ENCODE measurements at regions of chr3 and their contacts with region 1.

Region 1: GRCh38 chr3:169662132-169662842 is 1.2 kb downstream of the MECOM start:
- DNase-seq: peak; percentile 66
- ATAC-seq: peak; percentile 95
- H3K4me3 ChIP-seq: peak overlapping the region; percentile 53 to 66 (median 58); a peak in 5 of 6 replicates
- H3K27ac ChIP-seq: no peak overlapping the region
- H3K4me1 ChIP-seq: peaks cover 19% of the 10 kb centered on the region
- H3K27me3 ChIP-seq: peaks cover 12 to 77% of the 10 kb centered on the region in 2 experiments
- CTCF ChIP-seq: peak; percentile 71
- EP300 ChIP-seq: no peak
- POLR2A ChIP-seq: no peak
- RAD21 ChIP-seq: peak; percentile 65; the same call in 1 of the 2 replicates

Region 2: DNA sequence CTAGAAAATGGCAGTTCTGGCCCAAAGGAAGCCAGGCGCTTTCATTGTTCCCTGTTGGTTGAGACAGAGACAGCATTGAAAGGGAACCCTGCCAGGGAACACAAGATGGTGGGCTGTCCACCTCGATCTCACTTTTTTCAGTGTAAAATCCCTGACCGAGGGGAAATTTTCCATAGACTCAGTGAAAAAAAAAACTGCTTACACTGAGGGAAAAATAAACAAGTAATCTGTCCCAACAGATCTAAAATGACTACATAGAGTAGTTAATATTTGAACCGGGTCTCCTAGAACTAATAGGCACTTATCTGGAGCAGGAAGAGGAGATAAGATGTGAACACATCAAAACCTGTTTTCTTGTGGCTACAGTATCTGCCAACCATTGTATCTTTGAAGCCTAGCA is 803.1 kb before region 1 on chr3:
- CTCF ChIA-PET with region 1: no interaction called
- POLR2A ChIA-PET with region 1: no interaction called
- in situ Hi-C with region 1: loop called (anchors 10 kb)
- intact Hi-C with region 1: loop called (anchors 5 kb)
- DNase-seq: peak; percentile 91
- ATAC-seq: peak; percentile 97
- H3K4me3 ChIP-seq: no peak overlapping the region
- H3K27ac ChIP-seq: peak overlapping the region; percentile 90
- H3K4me1 ChIP-seq: peaks cover 69% of the 10 kb centered on the region
- H3K27me3 ChIP-seq: no peaks in the 10 kb centered on the region
- CTCF ChIP-seq: no peak
- EP300 ChIP-seq: peak in 1 of 2 experiments; percentile 98; a peak in 2 of 4 replicates
- POLR2A ChIP-seq: no peak
- RAD21 ChIP-seq: no peak

Region 3: DNA sequence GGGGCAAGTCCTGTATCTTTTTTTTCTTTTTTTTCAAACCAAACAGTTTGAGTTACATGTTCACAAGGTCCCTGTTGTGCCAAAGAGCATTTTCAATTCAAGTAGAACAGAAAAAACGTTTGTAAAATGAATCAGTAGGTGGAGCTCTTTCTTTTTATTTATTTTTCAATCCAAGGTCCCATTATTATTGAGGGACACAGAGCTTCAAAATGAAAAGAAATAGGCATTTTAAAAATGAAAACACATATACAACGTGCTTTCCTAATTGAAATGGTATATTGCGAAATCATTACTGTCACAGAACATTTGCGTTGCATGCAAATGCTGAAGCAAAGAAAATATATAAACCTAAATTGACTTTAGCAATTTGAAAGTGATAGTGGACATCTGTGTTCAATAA is 709.7 kb before region 1 on chr3:
- CTCF ChIA-PET with region 1: no interaction called
- POLR2A ChIA-PET with region 1: no interaction called
- in situ Hi-C with region 1: no loop called
- intact Hi-C with region 1: loop called (anchors 5 kb)
- DNase-seq: peak; percentile 5
- ATAC-seq: peak; percentile 51
- H3K4me3 ChIP-seq: no peak overlapping the region
- H3K27ac ChIP-seq: no peak overlapping the region
- H3K4me1 ChIP-seq: no peaks in the 10 kb centered on the region
- H3K27me3 ChIP-seq: no peaks in the 10 kb centered on the region
- CTCF ChIP-seq: peak; percentile 40; the same call in 1 of the 2 replicates
- EP300 ChIP-seq: no peak
- POLR2A ChIP-seq: no peak
- RAD21 ChIP-seq: no peak

Region 4: DNA sequence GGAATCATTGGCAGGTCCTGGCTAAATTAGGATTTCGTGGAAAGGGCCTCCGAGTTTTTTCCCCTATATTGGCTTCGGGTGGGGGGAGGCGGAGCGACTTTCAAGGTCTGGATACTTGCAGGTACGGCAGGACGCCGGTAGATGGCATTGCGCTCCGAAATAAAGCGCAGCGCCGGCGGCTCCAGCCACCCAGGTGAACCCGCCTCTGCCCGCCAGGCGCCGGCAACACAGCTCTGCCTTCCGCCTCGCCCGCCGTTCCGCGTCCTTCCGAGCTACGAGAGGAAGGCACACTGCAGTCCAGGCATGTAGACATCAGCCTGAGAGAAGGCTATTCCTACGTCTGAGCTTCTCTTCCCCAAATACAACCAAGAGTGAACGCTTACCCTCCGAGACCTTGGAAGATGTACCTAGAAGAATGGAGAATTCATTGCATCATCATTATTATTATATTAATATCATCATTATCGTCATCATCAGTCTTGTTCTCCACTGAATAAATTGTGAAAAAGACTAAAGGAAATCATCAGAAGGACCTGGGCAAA is 512.9 kb before region 1 on chr3:
- CTCF ChIA-PET with region 1: interaction called, 3 read pairs
- POLR2A ChIA-PET with region 1: no interaction called
- in situ Hi-C with region 1: loop called (anchors 5 kb)
- intact Hi-C with region 1: no loop called
- DNase-seq: peak; percentile 45
- ATAC-seq: peak; percentile 99
- H3K4me3 ChIP-seq: peak overlapping the region in 1 of 3 experiments; percentile 23; a peak in 1 of 6 replicates
- H3K27ac ChIP-seq: no peak overlapping the region
- H3K4me1 ChIP-seq: peaks cover 17% of the 10 kb centered on the region
- H3K27me3 ChIP-seq: peaks cover 1 to 33% of the 10 kb centered on the region in 2 experiments; a peak in 4 of 5 replicates
- CTCF ChIP-seq: peak; percentile 87
- EP300 ChIP-seq: no peak
- POLR2A ChIP-seq: no peak
- RAD21 ChIP-seq: peak; percentile 87

Region 5: GRCh38 chr3:169295126-169295525 is 367.2 kb before region 1 on chr3:
- CTCF ChIA-PET with region 1: no interaction called
- POLR2A ChIA-PET with region 1: no interaction called
- in situ Hi-C with region 1: no loop called
- intact Hi-C with region 1: loop called (anchors 5 kb)
- DNase-seq: no peak
- ATAC-seq: no peak
- H3K4me3 ChIP-seq: no peak overlapping the region
- H3K27ac ChIP-seq: no peak overlapping the region
- H3K4me1 ChIP-seq: no peaks in the 10 kb centered on the region
- H3K27me3 ChIP-seq: no peaks in the 10 kb centered on the region
- CTCF ChIP-seq: 0 out of 2 replicates have a peak, but pooled peaks have one; percentile 11
- EP300 ChIP-seq: no peak
- POLR2A ChIP-seq: no peak
- RAD21 ChIP-seq: no peak

Region 6: DNA sequence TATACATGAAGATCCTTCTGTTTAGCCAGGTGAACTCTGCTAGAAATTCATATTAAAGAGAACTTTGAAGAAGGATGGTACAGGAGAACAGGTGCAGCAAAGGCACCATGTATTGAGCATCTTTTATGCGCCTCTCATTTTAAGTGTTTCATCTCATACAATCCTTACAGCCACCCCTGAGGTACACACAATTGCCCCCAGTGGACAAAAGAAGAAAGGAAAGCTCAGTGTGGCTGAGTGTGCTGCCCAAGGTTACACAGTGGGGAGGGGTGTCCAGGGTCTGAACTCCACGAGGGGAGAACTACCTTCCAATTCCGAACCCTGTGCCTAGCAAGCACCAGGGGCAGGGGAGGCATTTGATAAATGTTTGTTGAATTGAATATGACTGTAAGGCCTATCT is 97.4 kb before region 1 on chr3:
- CTCF ChIA-PET with region 1: no interaction called
- POLR2A ChIA-PET with region 1: no interaction called
- in situ Hi-C with region 1: no loop called
- intact Hi-C with region 1: loop called (anchors 2 kb)
- DNase-seq: no peak
- ATAC-seq: peak; percentile 93
- H3K4me3 ChIP-seq: no peak overlapping the region
- H3K27ac ChIP-seq: no peak overlapping the region
- H3K4me1 ChIP-seq: peaks cover 12% of the 10 kb centered on the region
- H3K27me3 ChIP-seq: no peaks in the 10 kb centered on the region
- CTCF ChIP-seq: no peak
- EP300 ChIP-seq: no peak
- POLR2A ChIP-seq: no peak
- RAD21 ChIP-seq: no peak

Region 7: DNA sequence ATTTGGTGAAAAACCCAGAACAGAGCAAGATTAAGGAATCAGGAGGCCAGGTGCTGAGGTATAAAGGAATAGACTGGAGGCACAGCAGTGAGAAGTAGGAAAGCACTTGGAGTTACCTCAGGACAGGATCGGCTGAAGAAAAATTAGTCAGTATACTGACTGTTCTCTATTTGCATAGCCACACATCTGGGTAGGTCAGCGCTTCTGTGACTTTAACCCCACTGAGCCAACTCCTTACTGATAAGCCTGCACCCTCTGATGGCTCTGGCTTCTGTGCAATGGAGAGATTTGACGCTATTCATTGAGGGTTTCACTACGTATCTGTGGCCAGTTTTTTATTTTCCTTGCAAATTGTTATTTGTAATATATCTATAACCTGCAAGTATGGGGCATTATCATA is 21.1 kb before region 1 on chr3:
- CTCF ChIA-PET with region 1: no interaction called
- POLR2A ChIA-PET with region 1: no interaction called
- in situ Hi-C with region 1: no loop called
- intact Hi-C with region 1: no loop called
- DNase-seq: no peak
- ATAC-seq: no peak
- H3K4me3 ChIP-seq: no peak overlapping the region
- H3K27ac ChIP-seq: no peak overlapping the region
- H3K4me1 ChIP-seq: no peaks in the 10 kb centered on the region
- H3K27me3 ChIP-seq: no peaks in the 10 kb centered on the region
- CTCF ChIP-seq: no peak
- EP300 ChIP-seq: no peak
- POLR2A ChIP-seq: no peak
- RAD21 ChIP-seq: no peak

Region 8: DNA sequence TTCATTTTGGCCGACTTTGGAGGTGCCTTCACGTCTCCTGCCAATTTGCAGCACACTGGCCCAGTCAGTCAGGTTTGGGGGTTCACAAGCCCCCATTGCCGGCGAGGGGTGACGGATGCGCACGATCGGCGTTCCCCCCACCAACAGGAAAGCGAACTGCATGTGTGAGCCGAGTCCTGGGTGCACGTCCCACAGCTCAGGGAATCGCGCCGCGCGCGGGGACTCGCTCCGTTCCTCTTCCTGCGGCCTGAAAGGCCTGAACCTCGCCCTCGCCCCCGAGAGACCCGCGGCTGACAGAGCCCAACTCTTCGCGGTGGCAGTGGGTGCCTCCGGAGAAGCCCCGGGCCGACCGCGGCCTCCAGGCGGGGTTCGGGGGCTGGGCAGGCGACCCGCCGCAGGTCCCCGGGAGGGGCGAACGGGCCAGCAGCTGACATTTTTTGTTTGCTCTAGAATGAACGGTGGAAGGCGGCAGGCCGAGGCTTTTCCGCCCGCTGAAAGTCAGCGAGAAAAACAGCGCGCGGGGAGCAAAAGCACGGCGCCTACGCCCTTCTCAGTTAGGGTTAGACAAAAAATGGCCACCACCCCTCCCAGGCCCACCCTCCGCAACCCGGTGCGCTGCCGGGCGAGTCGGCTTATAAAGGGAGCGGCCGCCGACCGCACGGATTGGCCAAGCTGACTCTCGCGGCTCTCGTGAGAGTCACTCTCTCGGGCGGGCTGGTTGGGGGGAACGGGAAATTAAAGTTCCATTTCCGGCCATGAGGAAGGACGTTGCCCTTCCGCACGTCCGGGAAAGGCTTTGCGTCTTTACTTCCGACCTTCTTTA is 102.4 kb after region 1 on chr3 and contains the start of gene TERC:
- CTCF ChIA-PET with region 1: no interaction called
- POLR2A ChIA-PET with region 1: no interaction called
- in situ Hi-C with region 1: no loop called
- intact Hi-C with region 1: loop called (anchors 5 kb)
- DNase-seq: peak; percentile 79
- ATAC-seq: peak; percentile 85
- H3K4me3 ChIP-seq: peak within 1 kb of the TSS; percentile 62 to 80 (median 72)
- H3K27ac ChIP-seq: peak within 1 kb of the TSS; percentile 79
- H3K4me1 ChIP-seq: no peaks in the 10 kb centered on the region; the same call in 1 of the 2 replicates
- H3K27me3 ChIP-seq: 0 out of 5 replicates have a peak, but pooled peaks cover 0 to 4% of the 10 kb centered on the region in 2 experiments
- CTCF ChIP-seq: no peak
- EP300 ChIP-seq: no peak
- POLR2A ChIP-seq: peak; percentile 82 to 96
- RAD21 ChIP-seq: no peak
- total RNA-seq, gene TERC: 8.4 and 74.6 TPM in 2 replicates

Measured in HepG2 (cell line).